ENCODE measurements at regions of chrX and their contacts with region 1.

Region 1: GRCh38 chrX:46381630-46382029 is 163.6 kb downstream of the ZNF674 start:
- DNase-seq: peak; percentile 58
- H3K4me3 Mint-ChIP-seq: no peak overlapping the region
- H3K27ac Mint-ChIP-seq: no peak overlapping the region
- H3K4me1 Mint-ChIP-seq: no peaks in the 10 kb centered on the region
- H3K27me3 Mint-ChIP-seq: no peaks in the 10 kb centered on the region

Region 2: GRCh38 chrX:46408553-46409407 is 27.1 kb after region 1 on chrX:
- CTCF ChIA-PET with region 1: interaction called, 12 read pairs
- intact Hi-C with region 1: loop called (anchors 1 kb)
- DNase-seq: peak; percentile 81
- H3K4me3 Mint-ChIP-seq: no peak overlapping the region
- H3K27ac Mint-ChIP-seq: no peak overlapping the region
- H3K4me1 Mint-ChIP-seq: no peaks in the 10 kb centered on the region
- H3K27me3 Mint-ChIP-seq: no peaks in the 10 kb centered on the region

Region 3: GRCh38 chrX:46796574-46797191 is 415.1 kb after region 1 on chrX:
- CTCF ChIA-PET with region 1: no interaction called
- intact Hi-C with region 1: loop called (anchors 10 kb)
- DNase-seq: peak; percentile 86
- H3K4me3 Mint-ChIP-seq: no peak overlapping the region
- H3K27ac Mint-ChIP-seq: no peak overlapping the region
- H3K4me1 Mint-ChIP-seq: peaks cover 18% of the 10 kb centered on the region
- H3K27me3 Mint-ChIP-seq: no peaks in the 10 kb centered on the region